Transverse colon (tissue), 4 donors: ENCODE measurements at regions of chr1 and their contacts with region 1.

Region 1: DNA sequence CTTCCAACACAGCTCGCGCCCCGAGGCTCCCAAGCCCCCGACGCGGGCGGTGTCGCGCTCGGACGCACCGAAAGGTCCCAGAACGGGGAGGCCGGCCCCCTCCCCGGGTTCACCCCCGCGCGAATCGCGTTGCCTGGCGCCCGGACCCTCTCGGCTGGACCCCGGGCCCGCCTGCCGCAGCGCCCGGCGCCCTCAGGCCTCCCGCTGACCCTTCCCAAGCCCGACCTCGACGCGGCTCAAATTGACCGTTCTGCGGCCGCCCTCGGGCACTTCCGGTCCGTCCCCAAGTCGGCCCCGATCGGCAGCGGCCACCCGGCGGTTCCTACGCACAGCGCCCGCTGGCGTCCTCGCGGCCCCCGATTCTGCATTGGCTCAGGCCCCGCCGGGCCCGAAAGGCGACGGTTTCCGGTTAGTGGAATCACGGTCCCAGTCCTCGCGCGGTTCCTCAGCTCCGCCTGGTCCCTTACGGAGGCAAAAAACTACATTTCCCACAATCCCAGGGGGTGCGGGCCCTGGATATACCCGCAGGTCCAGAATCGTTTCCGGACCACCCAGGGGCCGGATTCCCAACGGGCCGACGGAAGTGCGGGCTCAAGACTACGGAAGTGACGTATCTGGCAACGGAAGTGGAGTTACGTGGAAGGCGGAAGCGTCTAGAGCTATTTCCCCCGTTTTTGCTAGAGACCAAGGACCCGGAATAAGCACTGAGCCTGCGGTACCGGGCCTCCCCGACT is at the start of gene AURKAIP1:
- DNase-seq: peak; percentile 98
- H3K4me3 ChIP-seq: peak within 1 kb of the TSS; percentile 90 to 99 (median 95)
- H3K27ac ChIP-seq: peak within 1 kb of the TSS; percentile 92 to 99 (median 96)
- H3K4me1 ChIP-seq: peaks cover 26 to 34% (median 30%) of the 10 kb centered on the region in 4 donors
- H3K27me3 ChIP-seq: no peaks in the 10 kb centered on the region
- CTCF ChIP-seq: peak in 4 of 5 experiments; percentile 12 to 53 (median 32)
- EP300 ChIP-seq: no peak
- POLR2A ChIP-seq: peak; percentile 62
- total RNA-seq, gene AURKAIP1: 110 to 197 (median 167) TPM

Region 2: DNA sequence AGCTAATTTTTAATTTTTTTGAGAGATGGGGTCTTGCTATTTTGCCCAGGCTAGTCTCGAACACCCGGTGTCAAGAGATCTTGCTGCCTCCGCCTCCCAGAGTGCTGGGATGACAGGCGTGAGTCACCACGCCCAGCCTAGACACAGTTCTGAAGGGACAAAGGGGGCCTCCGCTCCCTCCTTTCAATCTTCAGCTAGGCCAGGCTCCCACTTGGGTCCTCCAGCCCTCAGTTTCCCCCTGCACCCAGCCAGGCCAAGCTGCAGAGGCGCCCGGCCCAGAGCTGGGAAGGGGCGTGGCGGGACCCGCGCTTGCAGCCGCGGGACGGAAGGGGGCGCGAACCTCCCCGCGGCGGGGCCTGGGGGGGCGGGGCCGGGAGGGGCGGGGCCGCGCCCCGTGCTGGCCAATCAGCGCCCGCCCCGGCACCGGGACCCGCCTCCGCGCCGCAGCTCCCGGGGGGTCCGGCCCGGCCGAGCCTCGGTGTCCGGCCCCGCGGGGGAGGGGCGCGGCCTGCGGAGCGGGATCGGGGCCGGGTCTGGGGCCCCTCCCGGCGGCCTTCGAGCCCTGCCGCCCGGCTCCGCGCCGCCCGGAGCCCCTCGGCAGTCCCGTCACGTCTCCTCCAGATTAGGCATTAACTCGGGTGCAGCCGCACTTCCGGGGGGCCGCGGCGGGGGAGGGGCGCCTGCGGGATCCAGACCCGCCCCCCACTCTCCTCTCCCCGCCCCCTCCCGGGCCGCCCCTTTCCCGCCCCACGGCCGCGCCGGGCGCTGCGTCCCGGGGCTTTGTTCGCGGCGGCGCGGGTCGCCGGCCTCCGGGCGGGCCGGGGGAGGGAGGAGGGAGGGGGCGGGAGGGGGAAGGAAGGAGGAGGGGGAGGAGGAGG is 355.7 kb before region 1 on chr1:
- in situ Hi-C with region 1: no loop called
- intact Hi-C with region 1: loop called (anchors 10 kb)
- DNase-seq: peak; percentile 87
- H3K4me3 ChIP-seq: peak overlapping the region; percentile 57 to 79 (median 78)
- H3K27ac ChIP-seq: peak overlapping the region; percentile 92 to 98 (median 93)
- H3K4me1 ChIP-seq: peaks cover 9 to 30% (median 22%) of the 10 kb centered on the region in 4 donors
- H3K27me3 ChIP-seq: no peaks in the 10 kb centered on the region
- CTCF ChIP-seq: peak; percentile 41 to 63 (median 49)
- EP300 ChIP-seq: no peak
- POLR2A ChIP-seq: no peak

Region 3: GRCh38 chr1:1357871-1358432 is 17.1 kb before region 1 on chr1:
- in situ Hi-C with region 1: no loop called
- intact Hi-C with region 1: loop called (anchors 2 kb)
- DNase-seq: no peak
- H3K4me3 ChIP-seq: peak overlapping the region; percentile 15 to 54 (median 40)
- H3K27ac ChIP-seq: peak overlapping the region; percentile 86 to 92 (median 89)
- H3K4me1 ChIP-seq: peaks cover 23 to 76% (median 40%) of the 10 kb centered on the region in 4 donors
- H3K27me3 ChIP-seq: peaks cover 68% of the 10 kb centered on the region
- CTCF ChIP-seq: no peak
- EP300 ChIP-seq: no peak
- POLR2A ChIP-seq: no peak